ENCODE measurements at regions of chr9 and their contacts with region 1.

Region 1: GRCh38 chr9:121992571-121993212 is 100.4 kb downstream of the TTLL11 start:
- DNase-seq: peak; percentile 60
- H3K4me3 ChIP-seq: no peak overlapping the region
- H3K27ac ChIP-seq: no peak overlapping the region
- H3K4me1 ChIP-seq: no peaks in the 10 kb centered on the region
- H3K27me3 ChIP-seq: no peaks in the 10 kb centered on the region
- CTCF ChIP-seq: peak; percentile 65 to 75

Region 2: GRCh38 chr9:121545875-121546423 is 446.7 kb before region 1 on chr9:
- CTCF ChIA-PET with region 1: no interaction called
- dilution Hi-C with region 1: loop called (anchors 25 kb)
- in situ Hi-C with region 1: no loop called
- intact Hi-C with region 1: loop called (anchors 1 kb)
- DNase-seq: peak; percentile 93
- H3K4me3 ChIP-seq: no peak overlapping the region
- H3K27ac ChIP-seq: no peak overlapping the region
- H3K4me1 ChIP-seq: peaks cover 13% of the 10 kb centered on the region
- H3K27me3 ChIP-seq: no peaks in the 10 kb centered on the region
- CTCF ChIP-seq: peak; percentile 87 to 98

Region 3: DNA sequence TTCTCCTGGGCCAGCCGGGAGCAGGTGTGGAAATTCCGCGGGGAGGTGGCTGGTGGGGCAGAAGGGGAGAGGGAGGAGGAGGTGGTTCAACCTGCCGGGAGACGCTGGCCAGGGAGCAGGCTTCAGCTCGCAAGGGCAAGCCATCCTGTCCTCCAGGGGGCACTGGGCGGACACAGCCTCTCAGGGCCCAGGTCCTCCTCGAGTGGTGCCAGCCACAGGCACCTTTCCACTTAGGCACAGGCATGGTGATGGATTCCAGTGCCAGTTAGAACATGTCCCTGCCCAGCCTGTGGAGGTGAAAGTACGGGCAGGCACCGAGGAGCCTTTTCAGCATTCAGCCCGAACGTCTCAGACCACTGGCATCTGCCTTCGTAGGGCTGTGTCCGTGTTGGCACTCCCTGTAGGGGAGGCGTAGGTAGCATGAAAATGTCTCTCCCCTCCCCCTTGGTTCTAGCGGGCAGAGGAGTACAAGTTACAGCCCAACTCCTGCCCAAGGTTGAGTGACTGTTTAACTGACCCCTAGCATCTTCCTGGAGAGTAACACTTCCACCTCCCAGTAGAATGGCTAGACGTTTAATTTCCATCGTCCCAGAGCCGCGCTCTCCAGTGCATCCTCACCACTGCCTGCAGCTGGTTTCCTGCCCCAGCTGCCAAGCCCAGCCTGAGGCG is 292.4 kb before region 1 on chr9:
- CTCF ChIA-PET with region 1: no interaction called
- dilution Hi-C with region 1: no loop called
- in situ Hi-C with region 1: no loop called
- intact Hi-C with region 1: loop called (anchors 1 kb)
- DNase-seq: peak; percentile 99
- H3K4me3 ChIP-seq: peak overlapping the region; percentile 67 to 88 (median 72)
- H3K27ac ChIP-seq: peak overlapping the region; percentile 79
- H3K4me1 ChIP-seq: peaks cover 52% of the 10 kb centered on the region
- H3K27me3 ChIP-seq: no peaks in the 10 kb centered on the region
- CTCF ChIP-seq: peak; percentile 56 to 80

Region 4: GRCh38 chr9:121743441-121744001 is 249.2 kb before region 1 on chr9:
- CTCF ChIA-PET with region 1: no interaction called
- dilution Hi-C with region 1: no loop called
- in situ Hi-C with region 1: no loop called
- intact Hi-C with region 1: loop called (anchors 2 kb)
- DNase-seq: peak; percentile 77
- H3K4me3 ChIP-seq: peak overlapping the region; percentile 32 to 54 (median 49)
- H3K27ac ChIP-seq: peak overlapping the region; percentile 59
- H3K4me1 ChIP-seq: peaks cover 66% of the 10 kb centered on the region
- H3K27me3 ChIP-seq: no peaks in the 10 kb centered on the region
- CTCF ChIP-seq: peak in 1 of 2 donors; percentile 20

Region 5: GRCh38 chr9:121963528-121963995 is 29.1 kb before region 1 on chr9:
- CTCF ChIA-PET with region 1: no interaction called
- dilution Hi-C with region 1: no loop called
- in situ Hi-C with region 1: no loop called
- intact Hi-C with region 1: loop called (anchors 1 kb)
- DNase-seq: peak; percentile 78
- H3K4me3 ChIP-seq: peak overlapping the region; percentile 2 to 51 (median 4)
- H3K27ac ChIP-seq: peak overlapping the region; percentile 67
- H3K4me1 ChIP-seq: peaks cover 32% of the 10 kb centered on the region
- H3K27me3 ChIP-seq: no peaks in the 10 kb centered on the region
- CTCF ChIP-seq: no peak

Region 6: DNA sequence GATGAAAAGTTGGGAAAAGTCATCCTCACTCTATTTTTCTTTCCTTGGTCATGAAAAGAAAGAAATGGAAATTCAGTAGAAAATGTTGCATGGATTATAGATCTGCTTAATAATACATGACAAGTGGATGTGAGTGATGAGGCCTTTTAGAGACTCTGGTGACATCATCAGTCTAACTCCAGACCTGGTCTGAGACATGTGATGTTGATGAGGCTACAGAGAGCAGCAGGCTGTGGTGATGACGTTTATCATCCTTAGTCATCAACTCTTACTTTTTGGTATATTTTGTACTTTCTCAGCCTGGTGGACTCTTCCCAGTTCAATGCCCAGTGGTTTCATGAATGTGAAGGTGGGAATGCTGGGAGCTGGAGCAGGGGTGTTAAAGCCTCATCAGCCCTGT is 15.9 kb before region 1 on chr9:
- CTCF ChIA-PET with region 1: no interaction called
- dilution Hi-C with region 1: no loop called
- in situ Hi-C with region 1: no loop called
- intact Hi-C with region 1: no loop called
- DNase-seq: peak; percentile 70
- H3K4me3 ChIP-seq: no peak overlapping the region
- H3K27ac ChIP-seq: no peak overlapping the region
- H3K4me1 ChIP-seq: peaks cover 22% of the 10 kb centered on the region
- H3K27me3 ChIP-seq: no peaks in the 10 kb centered on the region
- CTCF ChIP-seq: no peak

Measured in mammary epithelial cell (primary cell).